PC-9 (cell line): ENCODE measurements at regions of chr4 and their contacts with region 1.

Region 1: DNA sequence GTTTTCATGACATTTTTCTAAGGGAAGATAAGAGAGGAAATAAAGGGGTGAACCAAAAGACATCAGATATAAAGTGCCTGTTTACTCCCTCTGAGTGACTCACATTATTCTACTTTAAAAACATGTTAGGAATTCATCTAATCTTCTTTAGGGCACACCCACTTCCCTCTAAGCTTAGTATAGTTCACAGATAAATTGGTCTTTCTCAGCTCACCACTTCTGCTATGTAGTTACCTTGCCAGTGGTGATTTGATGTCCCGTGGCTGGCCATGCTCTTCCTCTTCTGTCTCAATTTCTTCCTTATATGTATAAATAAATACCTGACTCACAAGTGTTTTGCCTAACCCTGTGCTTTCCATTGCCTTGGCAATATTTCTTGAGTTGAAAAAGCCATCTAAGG is 96.8 kb downstream of the PDLIM5 start:
- DNase-seq: peak; percentile 58 to 95
- H3K4me3 ChIP-seq: peak overlapping the region; percentile 44; the same call in 1 of the 2 replicates
- H3K27ac ChIP-seq: peak overlapping the region; percentile 94
- H3K4me1 ChIP-seq: peaks cover 52% of the 10 kb centered on the region
- H3K27me3 ChIP-seq: no peaks in the 10 kb centered on the region
- CTCF ChIP-seq: no peak

Region 2: GRCh38 chr4:94412658-94413038 is 135.9 kb before region 1 on chr4:
- CTCF ChIA-PET with region 1: no interaction called
- POLR2A ChIA-PET with region 1: no interaction called
- intact Hi-C with region 1: loop called (anchors 2 kb)
- DNase-seq: peak; percentile 15 to 57
- H3K4me3 ChIP-seq: peak overlapping the region; percentile 7; the same call in 1 of the 2 replicates
- H3K27ac ChIP-seq: peak overlapping the region; percentile 57
- H3K4me1 ChIP-seq: peaks cover 22% of the 10 kb centered on the region
- H3K27me3 ChIP-seq: no peaks in the 10 kb centered on the region
- CTCF ChIP-seq: no peak

Region 3: GRCh38 chr4:94451695-94452475 is 96.7 kb before region 1 on chr4 and contains the start of gene PDLIM5:
- CTCF ChIA-PET with region 1: no interaction called
- POLR2A ChIA-PET with region 1: interaction called, 6 read pairs
- intact Hi-C with region 1: loop called (anchors 1 kb)
- DNase-seq: peak; percentile 68 to 85
- H3K4me3 ChIP-seq: peak within 1 kb of the TSS; percentile 98
- H3K27ac ChIP-seq: peak within 1 kb of the TSS; percentile 80
- H3K4me1 ChIP-seq: peaks cover 26% of the 10 kb centered on the region
- H3K27me3 ChIP-seq: no peaks in the 10 kb centered on the region
- CTCF ChIP-seq: no peak
- total RNA-seq, gene PDLIM5: 121 and 130 TPM in 2 replicates

Region 4: DNA sequence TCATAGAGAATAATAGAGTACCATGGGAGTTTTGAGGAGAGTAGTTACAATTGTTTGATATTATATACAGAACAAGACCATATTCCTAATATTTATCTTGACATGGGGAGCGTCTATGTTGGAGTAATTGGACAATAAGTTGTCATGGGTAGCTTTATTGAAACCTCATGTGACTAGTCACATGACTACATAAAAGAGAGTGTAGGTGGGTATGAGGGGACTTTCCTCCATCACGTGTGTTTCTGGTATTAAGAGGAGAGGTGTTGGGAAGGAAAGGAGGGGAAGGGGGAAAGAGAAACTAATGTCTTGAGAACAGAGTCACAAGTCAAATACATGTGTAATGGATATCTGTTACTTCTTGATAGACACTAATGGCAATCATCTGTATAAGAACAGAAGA is 63.8 kb before region 1 on chr4:
- CTCF ChIA-PET with region 1: no interaction called
- POLR2A ChIA-PET with region 1: interaction called, 4 read pairs
- intact Hi-C with region 1: loop called (anchors 1 kb)
- DNase-seq: no peak
- H3K4me3 ChIP-seq: no peak overlapping the region
- H3K27ac ChIP-seq: no peak overlapping the region
- H3K4me1 ChIP-seq: no peaks in the 10 kb centered on the region
- H3K27me3 ChIP-seq: no peaks in the 10 kb centered on the region
- CTCF ChIP-seq: no peak

Region 5: DNA sequence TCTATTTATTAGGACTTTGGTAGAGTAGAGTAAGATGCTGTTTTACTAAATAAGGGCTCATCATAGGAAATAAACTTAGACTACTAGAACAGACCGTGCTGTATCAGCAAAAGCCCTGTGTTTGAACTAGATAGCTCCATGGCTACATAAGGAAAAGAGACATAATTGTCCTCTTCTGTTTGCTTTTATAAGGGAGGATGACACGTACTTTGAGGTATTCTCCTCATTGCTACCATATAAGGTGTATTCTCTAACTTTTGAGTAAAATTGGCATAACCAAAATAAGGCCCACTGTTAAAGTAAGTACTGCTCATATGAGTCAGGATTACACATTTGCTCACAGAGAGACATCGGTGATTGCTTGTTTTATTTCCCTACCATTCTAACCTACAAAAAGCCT is 32.5 kb before region 1 on chr4:
- CTCF ChIA-PET with region 1: no interaction called
- POLR2A ChIA-PET with region 1: no interaction called
- intact Hi-C with region 1: loop called (anchors 2 kb)
- DNase-seq: peak in 1 of 2 experiments; percentile 46
- H3K4me3 ChIP-seq: no peak overlapping the region
- H3K27ac ChIP-seq: no peak overlapping the region
- H3K4me1 ChIP-seq: no peaks in the 10 kb centered on the region
- H3K27me3 ChIP-seq: no peaks in the 10 kb centered on the region
- CTCF ChIP-seq: no peak

Region 6: GRCh38 chr4:94577136-94577535 is 28.6 kb after region 1 on chr4:
- CTCF ChIA-PET with region 1: no interaction called
- POLR2A ChIA-PET with region 1: no interaction called
- intact Hi-C with region 1: no loop called
- DNase-seq: no peak
- H3K4me3 ChIP-seq: no peak overlapping the region
- H3K27ac ChIP-seq: no peak overlapping the region
- H3K4me1 ChIP-seq: no peaks in the 10 kb centered on the region
- H3K27me3 ChIP-seq: no peaks in the 10 kb centered on the region
- CTCF ChIP-seq: no peak

Region 7: GRCh38 chr4:94595879-94596483 is 47.4 kb after region 1 on chr4:
- CTCF ChIA-PET with region 1: no interaction called
- POLR2A ChIA-PET with region 1: interaction called, 7 read pairs
- intact Hi-C with region 1: loop called (anchors 1 kb)
- DNase-seq: peak in 1 of 2 experiments; percentile 53
- H3K4me3 ChIP-seq: no peak overlapping the region
- H3K27ac ChIP-seq: no peak overlapping the region
- H3K4me1 ChIP-seq: no peaks in the 10 kb centered on the region; the same call in 1 of the 2 replicates
- H3K27me3 ChIP-seq: no peaks in the 10 kb centered on the region
- CTCF ChIP-seq: peak; percentile 77

Region 8: DNA sequence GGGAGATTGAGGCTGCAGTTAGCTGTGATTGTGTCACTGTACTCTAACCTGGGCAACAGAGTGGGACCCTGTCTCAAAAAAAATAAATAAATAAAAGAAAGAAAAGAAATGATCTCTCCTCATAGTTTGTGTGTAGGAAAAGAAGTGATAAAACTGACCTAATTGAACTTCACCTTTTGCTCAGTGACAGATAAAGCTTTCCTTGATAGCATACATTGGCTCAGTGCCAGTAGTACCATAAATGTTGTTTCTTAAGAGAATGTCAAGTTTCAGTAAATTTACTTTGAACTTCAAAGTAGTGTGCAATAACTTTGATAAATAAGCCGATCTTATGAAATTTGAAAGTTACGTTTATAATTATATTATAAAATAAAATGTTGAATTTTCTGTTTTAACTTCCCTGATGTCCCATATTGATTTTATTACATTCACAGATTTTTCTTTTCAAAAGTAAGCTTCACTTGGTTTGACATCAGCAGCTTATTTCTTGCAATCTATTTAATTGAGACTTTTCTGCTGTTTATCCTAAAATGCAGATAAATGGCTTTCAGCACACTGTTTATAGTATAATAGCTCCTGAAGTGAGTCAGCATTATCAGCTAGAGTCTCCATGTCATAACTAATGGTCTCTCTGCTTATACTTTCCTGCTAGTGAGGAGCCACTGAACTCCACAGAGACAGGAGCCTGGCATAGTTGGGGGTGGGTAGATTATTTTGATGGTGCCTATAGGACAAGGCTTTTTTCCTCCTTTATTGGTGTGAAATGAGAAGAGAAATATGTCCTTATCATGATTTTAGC is 539.3 kb after region 1 on chr4:
- CTCF ChIA-PET with region 1: no interaction called
- POLR2A ChIA-PET with region 1: no interaction called
- intact Hi-C with region 1: loop called (anchors 5 kb)
- DNase-seq: no peak
- H3K4me3 ChIP-seq: no peak overlapping the region
- H3K27ac ChIP-seq: no peak overlapping the region
- H3K4me1 ChIP-seq: peaks cover 36% of the 10 kb centered on the region
- H3K27me3 ChIP-seq: no peaks in the 10 kb centered on the region
- CTCF ChIP-seq: no peak